CD8-positive, alpha-beta memory T cell (primary cell): ENCODE measurements at regions of chr2 and their contacts with region 1.

Region 1: DNA sequence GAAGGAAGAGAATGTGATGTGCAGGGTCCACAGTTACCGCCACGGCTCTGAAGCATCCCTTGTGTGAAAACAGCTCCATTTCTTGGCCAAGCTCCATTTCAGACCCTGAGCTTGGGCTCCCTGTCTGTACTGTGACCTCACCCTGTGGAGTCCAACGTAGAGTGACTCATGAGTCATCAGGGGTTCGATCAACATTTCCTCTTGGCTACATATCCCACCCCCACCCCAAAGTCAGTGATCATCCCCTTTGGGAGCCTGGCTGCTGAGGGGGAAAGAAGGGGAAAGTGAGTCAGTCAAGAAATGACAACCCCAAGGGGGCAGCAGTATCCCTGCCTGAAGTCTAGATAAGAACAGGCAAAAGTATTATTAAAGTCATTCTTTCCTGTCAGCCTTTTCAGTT is 62.2 kb downstream of the PAPOLG start:
- DNase-seq: peak in 3 of 5 donors; percentile 6 to 58 (median 8)
- H3K4me3 ChIP-seq: no peak overlapping the region
- H3K4me3 Mint-ChIP-seq: peak overlapping the region in 6 of 7 donors; percentile 19 to 66 (median 34)
- H3K27ac ChIP-seq: no peak overlapping the region
- H3K27ac Mint-ChIP-seq: peak overlapping the region; percentile 31 to 100 (median 94)
- H3K4me1 ChIP-seq: peaks cover 31% of the 10 kb centered on the region
- H3K4me1 Mint-ChIP-seq: peaks cover 45 to 56% (median 49%) of the 10 kb centered on the region in 3 donors
- H3K27me3 ChIP-seq: no peaks in the 10 kb centered on the region
- H3K27me3 Mint-ChIP-seq: peaks cover 0 to 7% of the 10 kb centered on the region in 2 donors

Region 2: DNA sequence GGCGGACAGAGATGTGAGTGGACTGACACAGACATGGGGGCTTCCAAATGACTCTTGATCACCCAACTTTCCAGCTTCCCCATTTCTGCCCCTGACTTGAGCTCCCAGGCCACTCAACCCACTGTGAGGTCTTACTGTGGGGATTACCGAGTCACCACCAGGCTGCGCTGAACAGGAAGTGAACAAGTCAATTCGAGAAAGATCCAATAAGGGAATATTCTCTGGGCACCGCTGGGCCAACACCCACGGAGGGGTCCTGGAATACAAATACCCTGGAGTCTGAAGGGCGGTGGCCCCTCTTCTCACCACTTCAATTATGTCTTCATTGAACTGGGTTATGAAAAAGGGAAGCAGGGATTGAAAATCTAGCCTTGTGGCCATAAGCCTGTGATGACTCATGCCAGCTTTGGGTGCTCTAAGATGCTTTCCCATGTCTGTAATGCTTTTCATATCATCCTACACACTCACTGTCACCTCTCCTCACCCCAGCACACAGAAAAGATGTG is 302.5 kb before region 1 on chr2:
- CTCF ChIA-PET with region 1: no interaction called
- POLR2A ChIA-PET with region 1: no interaction called
- DNase-seq: no peak
- H3K4me3 ChIP-seq: no peak overlapping the region
- H3K4me3 Mint-ChIP-seq: no peak overlapping the region
- H3K27ac ChIP-seq: no peak overlapping the region
- H3K27ac Mint-ChIP-seq: no peak overlapping the region
- H3K4me1 ChIP-seq: no peaks in the 10 kb centered on the region
- H3K4me1 Mint-ChIP-seq: no peaks in the 10 kb centered on the region
- H3K27me3 ChIP-seq: no peaks in the 10 kb centered on the region
- H3K27me3 Mint-ChIP-seq: peaks cover 15 to 36% of the 10 kb centered on the region in 2 donors

Region 3: DNA sequence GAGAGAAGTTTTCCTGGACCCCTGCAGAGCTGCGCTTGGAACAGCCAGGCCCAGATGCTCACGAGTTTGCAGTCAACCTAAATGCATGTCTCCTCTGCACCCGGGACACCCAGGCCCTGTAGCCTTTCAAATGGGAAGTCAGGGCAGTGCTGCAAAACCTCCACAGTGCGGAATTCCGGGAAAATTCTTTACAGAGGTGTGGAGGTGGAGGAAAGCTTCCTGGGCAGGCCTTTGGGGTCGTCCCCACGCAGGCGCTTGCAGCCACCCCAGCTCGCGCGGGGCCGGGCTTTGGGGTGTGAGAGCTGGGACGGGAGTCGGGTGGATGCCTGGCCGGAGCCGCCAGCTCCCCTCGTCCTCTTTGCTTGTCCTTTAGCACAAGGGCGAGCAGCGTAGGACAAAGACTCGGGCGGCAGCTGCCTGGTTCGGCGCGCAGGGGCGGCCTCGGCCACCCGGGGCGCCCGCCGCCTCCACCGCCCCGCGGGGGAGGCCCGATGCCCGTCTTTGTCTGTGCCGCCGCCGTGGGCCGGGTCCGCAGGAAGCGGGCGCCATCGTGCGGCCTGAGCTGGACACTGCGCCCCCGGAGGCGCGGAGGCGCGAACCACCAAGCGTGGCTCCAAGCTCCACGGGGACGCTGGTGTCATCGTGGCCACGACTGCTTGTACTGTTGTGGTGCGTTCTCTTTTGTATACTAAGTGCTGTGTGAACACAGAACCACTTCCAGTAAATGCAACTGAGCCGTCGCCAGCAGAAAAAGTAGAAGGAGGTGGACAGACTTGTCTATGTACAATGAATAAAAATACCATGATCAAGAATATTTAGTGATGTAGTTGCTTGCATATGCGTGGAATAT is 236.6 kb before region 1 on chr2:
- CTCF ChIA-PET with region 1: no interaction called
- POLR2A ChIA-PET with region 1: no interaction called
- DNase-seq: peak; percentile 13 to 57 (median 38)
- H3K4me3 ChIP-seq: no peak overlapping the region
- H3K4me3 Mint-ChIP-seq: peak overlapping the region in 3 of 7 donors; percentile 8 to 32 (median 20)
- H3K27ac ChIP-seq: no peak overlapping the region
- H3K27ac Mint-ChIP-seq: no peak overlapping the region
- H3K4me1 ChIP-seq: no peaks in the 10 kb centered on the region
- H3K4me1 Mint-ChIP-seq: peaks cover 0 to 7% (median 4%) of the 10 kb centered on the region in 3 donors
- H3K27me3 ChIP-seq: peaks cover 14% of the 10 kb centered on the region
- H3K27me3 Mint-ChIP-seq: peaks cover 44 to 64% of the 10 kb centered on the region in 2 donors

Region 4: DNA sequence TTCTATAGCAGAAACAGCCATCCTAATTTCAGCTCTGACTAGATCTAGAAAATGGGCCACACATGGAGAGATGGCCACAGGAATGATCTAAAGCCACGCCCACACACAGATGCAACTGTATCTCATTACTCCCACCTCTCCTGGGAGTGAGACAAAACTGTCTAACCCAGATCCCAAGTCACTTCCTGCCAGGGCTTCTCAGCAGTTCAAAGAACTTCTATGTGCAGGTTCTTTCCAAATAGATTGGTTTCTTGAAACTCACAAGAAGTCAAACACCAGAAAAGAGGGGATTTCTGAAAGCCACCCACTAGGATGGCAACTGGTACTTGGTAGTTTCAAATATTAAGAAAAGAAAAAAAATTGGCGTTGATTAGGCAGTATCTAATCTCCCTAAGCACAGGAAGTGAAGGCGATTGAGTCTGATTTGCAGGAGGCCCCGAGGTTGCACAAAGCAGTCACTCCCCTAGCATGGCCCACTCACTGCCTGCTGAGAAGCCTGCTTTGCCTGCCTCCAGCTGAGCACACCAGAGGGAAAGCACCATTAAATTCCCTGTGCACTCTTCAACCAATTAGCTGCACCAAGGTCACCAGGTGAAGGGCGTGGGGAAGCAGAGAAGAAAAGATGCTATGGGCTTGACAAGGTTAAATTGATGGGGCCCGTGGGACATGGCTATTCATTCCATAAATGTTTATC is 11.1 kb before region 1 on chr2:
- CTCF ChIA-PET with region 1: interaction called, 21 read pairs
- POLR2A ChIA-PET with region 1: no interaction called
- DNase-seq: peak; percentile 10 to 48 (median 23)
- H3K4me3 ChIP-seq: peak overlapping the region; percentile 13
- H3K4me3 Mint-ChIP-seq: peak overlapping the region in 5 of 7 donors; percentile 43 to 67 (median 63)
- H3K27ac ChIP-seq: peak overlapping the region; percentile 4
- H3K27ac Mint-ChIP-seq: peak overlapping the region; percentile 72 to 97 (median 89)
- H3K4me1 ChIP-seq: peaks cover 29% of the 10 kb centered on the region
- H3K4me1 Mint-ChIP-seq: peaks cover 35 to 51% (median 40%) of the 10 kb centered on the region in 3 donors
- H3K27me3 ChIP-seq: no peaks in the 10 kb centered on the region
- H3K27me3 Mint-ChIP-seq: no peaks in the 10 kb centered on the region